G401 (cell line): ENCODE measurements at regions of chr6 and their contacts with region 1.

Region 1: GRCh38 chr6:10528170-10528981 is 7.2 kb downstream of the GCNT2 start:
- DNase-seq: peak; percentile 29

Region 2: GRCh38 chr6:10609995-10610688 is 81.8 kb after region 1 on chr6:
- in situ Hi-C with region 1: loop called (anchors 5 kb)
- DNase-seq: no peak